ENCODE measurements at regions of chr4 and their contacts with region 1.

Region 1: DNA sequence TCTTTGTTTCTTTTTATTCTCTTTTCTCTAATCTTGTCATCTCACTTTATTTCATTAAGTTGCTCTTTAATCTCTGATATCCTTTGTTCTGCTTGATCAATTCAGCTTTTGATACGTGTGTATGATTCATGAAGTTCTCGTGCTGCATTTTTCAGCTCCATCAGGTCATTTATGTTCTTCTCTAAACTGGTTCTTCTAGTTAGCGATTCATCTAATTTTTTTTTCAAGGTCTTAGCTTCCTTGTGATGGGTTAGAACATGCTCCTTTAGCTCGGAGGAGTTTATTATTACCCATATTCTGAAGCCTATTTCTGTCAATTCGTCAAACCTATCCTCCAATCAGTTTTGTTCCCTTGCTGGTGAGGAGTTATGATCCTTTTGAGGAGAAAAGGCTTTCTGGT is 1045.0 kb upstream of the ADGRL3 start:
- DNase-seq: no peak

Region 2: DNA sequence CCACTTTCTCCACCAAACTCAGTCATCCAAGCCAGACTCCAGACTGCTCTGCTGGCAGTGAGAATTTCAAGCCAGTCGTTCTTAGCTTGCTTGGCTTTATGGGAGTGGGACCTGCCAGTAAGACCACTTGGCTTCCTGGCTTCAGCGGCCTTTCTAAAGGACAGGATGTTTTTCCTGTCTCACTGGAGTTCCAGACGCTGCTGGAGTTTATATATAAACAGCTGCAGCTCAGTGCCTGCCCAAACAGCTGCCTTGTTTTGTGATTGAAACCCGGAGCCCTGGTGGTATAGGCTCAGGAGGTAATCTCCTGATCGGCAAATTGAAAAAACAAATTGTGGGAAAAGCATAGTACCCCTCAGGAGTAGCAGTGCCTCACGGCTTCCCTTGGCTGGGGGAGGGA is 120.7 kb before region 1 on chr4:
- intact Hi-C with region 1: no loop called
- DNase-seq: no peak

Region 3: GRCh38 chr4:60223208-60223923 is 68.3 kb after region 1 on chr4:
- intact Hi-C with region 1: loop called in 1 of 2 experiments (anchors 2 kb)
- DNase-seq: no peak